Posterior vena cava (tissue), 2 donors: ENCODE measurements at regions of chr1 and their contacts with region 1.

Region 1: GRCh38 chr1:45230540-45230939 is 24.1 kb upstream of the ZSWIM5 start:
- DNase-seq: no peak

Region 2: GRCh38 chr1:44739361-44740178 is 491.0 kb before region 1 on chr1 and contains the start of gene KIF2C:
- intact Hi-C with region 1: no loop called
- DNase-seq: peak; percentile 99
- total RNA-seq, gene KIF2C: 0.43 to 0.93 TPM

Region 3: GRCh38 chr1:44903011-44903680 is 327.4 kb before region 1 on chr1:
- intact Hi-C with region 1: no loop called
- DNase-seq: no peak

Region 4: DNA sequence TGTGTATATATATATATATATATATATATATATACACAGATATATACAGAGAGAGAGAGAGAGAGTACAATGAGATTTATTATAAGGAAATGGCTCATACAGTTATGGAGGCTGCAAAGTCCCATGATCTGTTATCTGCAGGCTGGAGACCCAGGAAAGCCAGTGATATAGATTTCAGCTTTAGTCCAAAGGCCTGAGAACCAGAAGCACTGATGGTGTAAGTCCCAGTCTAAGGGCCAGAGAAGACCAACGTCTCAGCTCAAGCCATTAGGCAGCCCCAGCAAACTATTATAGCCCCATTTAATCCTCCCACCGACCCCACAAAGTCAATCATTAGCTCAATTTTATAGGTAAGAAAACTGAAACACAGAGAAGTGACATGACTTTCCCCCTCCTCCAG is 61.2 kb after region 1 on chr1:
- intact Hi-C with region 1: no loop called
- DNase-seq: no peak

Region 5: DNA sequence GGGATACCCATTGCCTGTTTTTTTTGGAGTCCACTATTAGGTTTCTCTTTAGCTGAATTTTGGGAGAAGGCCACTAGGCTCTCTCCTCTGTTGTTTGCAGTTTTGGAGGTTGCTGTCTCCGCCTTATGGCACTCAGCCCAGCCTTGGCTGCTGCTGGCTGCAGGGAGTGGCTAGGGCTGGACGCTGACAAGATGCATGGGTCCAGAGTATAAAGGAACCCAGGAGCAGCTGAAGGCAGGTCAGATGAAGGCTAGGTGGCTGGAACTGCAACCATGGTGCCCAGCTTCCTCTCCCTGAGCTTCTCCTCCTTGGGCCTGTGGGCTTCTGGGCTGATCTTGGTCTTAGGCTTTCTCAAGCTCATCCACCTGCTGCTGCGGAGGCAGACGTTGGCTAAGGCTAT is 1568.3 kb after region 1 on chr1 and contains the start of gene CYP4B1:
- intact Hi-C with region 1: loop called in 1 of 2 experiments (anchors 10 kb)
- DNase-seq: peak; percentile 93
- total RNA-seq, gene CYP4B1: 11.6 to 35.2 TPM